Calu3 (cell line): ENCODE measurements at regions of chr2 and their contacts with region 1.

Region 1: DNA sequence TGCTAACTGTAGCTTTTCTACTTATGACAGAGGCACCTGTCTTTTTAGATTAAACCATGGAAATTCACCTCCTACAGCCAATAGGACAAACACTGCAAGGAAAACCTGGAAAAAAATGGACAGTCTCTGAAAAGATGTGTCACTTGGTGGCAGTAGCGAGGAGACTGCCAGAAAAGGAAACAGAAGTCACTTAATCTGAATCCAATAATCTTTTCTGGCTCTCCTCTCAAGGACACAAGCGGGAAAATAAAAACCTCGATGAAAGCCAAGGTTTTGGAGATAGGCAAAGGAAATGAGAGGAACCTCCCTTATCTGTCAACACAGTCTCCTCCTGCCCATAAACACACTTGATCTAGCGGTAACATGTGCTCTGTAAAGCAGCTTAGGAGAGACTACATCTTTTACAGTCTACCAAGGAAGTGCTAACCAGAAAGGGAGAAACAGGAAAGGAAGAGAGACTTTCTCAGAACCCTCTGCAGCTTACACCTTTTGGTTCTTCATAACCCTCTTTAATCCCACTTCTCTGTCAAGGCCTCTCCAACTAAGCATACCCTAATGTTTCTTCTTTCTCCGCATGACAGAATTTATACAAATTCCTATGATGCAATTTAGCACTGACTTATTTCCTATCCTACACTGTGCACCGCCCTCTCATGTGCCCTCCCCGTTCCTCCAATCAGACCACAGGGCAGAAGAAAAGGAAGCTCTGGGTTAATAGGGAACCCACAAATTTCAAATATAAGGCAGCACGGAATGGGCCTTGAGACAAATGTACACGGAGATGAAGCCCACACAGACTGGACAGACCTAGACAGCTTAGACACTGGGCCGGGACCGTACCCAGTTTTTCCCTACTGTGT is 52.8 kb downstream of the CLASP1 start:
- DNase-seq: peak; percentile 40
- H3K4me3 Mint-ChIP-seq: peak overlapping the region; percentile 63
- H3K27ac Mint-ChIP-seq: peak overlapping the region; percentile 60
- H3K4me1 Mint-ChIP-seq: peaks cover 40% of the 10 kb centered on the region
- H3K27me3 Mint-ChIP-seq: no peaks in the 10 kb centered on the region
- CTCF ChIP-seq: peak; percentile 65

Region 2: DNA sequence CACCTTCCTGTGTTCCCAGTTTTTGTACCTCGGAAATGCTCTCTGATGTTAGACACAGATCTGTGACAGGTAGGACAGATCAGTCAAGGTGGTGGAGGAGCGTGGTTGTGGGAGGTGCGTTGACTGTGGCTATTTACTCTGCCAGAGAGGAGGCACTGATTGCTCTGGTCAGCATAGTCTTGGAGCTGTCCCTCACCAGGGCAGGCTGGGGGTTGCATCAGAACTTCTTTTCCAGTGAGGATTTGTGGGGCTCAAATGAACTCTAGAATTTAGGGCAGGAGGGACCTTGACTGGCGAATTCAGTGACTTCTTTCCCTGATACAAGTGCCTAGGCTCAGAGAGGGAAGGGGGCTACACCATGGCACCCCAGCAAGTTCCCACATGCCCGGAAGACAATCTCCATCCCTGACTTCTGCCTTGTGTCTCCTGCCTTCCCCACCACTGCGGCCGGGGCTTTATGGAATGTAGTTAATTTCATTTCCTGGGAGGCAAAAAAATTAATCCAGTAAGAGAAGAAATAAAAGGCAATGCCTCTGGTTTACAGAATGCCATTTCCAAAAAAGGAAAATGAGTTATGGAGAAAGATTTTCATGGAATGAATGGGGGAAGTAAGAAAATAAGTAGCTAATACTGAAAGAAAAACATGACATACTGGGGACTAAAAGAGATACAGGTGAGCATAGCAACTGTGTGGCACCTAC is 114.2 kb after region 1 on chr2:
- CTCF ChIA-PET with region 1: no interaction called
- intact Hi-C with region 1: loop called (anchors 2 kb)
- DNase-seq: peak; percentile 57
- H3K4me3 Mint-ChIP-seq: peak overlapping the region; percentile 60
- H3K27ac Mint-ChIP-seq: peak overlapping the region; percentile 92
- H3K4me1 Mint-ChIP-seq: peaks cover 71% of the 10 kb centered on the region
- H3K27me3 Mint-ChIP-seq: no peaks in the 10 kb centered on the region
- CTCF ChIP-seq: no peak